Ovary (tissue), 10 donors: ENCODE measurements at regions of chr6 and their contacts with region 1.

Region 1: DNA sequence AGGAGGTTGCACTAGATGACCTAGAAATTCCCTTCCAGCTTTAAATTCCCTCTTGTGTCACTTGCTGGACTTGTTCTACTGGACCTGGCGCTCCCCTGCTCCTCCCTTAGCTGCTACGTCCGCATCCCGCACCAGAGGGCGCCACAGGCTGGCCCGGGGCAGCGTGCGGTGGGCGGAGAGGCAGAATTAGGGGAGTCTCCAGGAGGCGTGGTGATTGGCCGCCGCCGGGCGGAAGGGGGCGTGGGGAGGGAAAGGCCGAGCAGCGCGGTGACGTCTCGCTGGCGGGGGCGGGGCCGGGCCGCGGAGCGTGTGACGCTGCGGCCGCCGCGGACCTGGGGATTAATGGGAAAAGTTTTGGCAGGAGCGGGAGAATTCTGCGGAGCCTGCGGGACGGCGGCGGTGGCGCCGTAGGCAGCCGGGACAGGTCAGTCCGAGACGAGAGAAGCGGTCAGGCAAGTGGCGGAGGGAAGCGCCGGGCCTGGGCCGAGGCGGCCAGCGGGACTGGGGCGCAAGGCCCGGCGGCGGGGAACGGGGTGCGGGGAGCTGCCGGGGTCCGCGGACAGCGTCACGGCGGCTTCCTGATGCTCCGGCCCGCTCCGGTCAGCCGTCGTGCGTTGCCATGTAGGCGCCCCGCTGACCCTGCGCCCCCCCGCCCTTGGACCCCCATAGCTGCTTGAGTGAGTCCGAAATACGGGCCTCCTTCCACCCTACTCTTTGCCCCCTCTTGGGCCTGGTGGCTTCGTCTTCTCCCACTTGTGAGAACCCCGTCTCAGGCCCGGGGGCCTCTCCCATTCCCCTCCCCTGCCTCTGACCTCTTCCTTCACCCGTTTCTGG is at the start of gene PPARD:
- DNase-seq: peak; percentile 98 to 99 (median 99)
- H3K4me3 ChIP-seq: peak within 1 kb of the TSS; percentile 67
- H3K27ac ChIP-seq: peak within 1 kb of the TSS; percentile 88 to 93
- H3K4me1 ChIP-seq: peaks cover 2% of the 10 kb centered on the region
- H3K27me3 ChIP-seq: no peaks in the 10 kb centered on the region
- CTCF ChIP-seq: peak; percentile 97 to 100 (median 99)
- EP300 ChIP-seq: no peak
- POLR2A ChIP-seq: peak; percentile 86
- total RNA-seq, gene PPARD: 7.9 to 55.9 (median 25.9) TPM

Region 2: DNA sequence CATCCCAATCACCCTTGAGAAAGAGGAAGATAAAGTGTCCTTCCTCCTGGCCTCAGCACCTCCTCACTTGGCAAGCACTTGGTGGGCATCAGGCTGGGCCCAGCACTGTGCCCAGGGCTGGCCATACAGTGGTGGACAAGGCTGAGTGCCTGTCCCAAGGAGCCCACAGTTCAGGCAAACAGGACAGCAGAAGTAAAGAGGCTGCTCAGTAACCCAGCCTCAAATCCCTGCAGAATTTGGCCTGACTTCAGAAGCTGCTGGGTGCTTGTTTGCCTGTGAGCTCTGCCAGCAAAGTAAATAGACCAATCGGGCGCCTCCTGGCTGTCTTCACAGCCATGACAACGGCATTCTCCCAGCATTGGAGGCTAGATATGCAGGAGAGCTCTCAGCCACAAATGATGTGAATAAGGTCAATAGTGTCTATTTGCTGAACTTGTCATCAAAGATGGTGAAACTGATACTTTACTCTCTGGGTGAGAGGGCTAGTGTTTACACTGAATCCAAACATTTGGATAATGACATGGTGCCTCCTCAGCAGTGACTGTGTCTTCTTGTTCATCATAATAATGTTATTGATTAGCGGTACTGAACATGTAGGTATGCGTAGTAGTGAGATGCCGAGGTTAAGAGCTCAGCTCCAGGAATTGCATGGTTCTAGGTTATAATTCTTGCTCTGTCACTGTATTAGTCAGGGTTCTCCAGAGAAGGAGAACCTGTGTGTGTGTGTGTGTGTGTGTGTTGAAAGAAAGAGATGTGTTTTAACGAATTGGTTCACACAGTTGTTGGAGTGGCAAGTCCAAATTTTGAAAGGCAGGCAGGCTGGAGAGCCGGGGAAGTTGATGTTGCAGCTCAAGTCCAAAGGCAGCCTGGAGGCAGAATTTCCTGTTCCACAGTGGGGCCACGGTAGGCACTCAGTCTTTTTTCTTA is 72.9 kb after region 1 on chr6:
- intact Hi-C with region 1: loop called (anchors 2 to 10 kb)
- DNase-seq: peak; percentile 80 to 85 (median 82)
- H3K4me3 ChIP-seq: no peak overlapping the region
- H3K27ac ChIP-seq: no peak overlapping the region
- H3K4me1 ChIP-seq: peaks cover 2% of the 10 kb centered on the region
- H3K27me3 ChIP-seq: no peaks in the 10 kb centered on the region
- CTCF ChIP-seq: peak; percentile 42 to 81 (median 74)
- EP300 ChIP-seq: no peak
- POLR2A ChIP-seq: no peak

Region 3: DNA sequence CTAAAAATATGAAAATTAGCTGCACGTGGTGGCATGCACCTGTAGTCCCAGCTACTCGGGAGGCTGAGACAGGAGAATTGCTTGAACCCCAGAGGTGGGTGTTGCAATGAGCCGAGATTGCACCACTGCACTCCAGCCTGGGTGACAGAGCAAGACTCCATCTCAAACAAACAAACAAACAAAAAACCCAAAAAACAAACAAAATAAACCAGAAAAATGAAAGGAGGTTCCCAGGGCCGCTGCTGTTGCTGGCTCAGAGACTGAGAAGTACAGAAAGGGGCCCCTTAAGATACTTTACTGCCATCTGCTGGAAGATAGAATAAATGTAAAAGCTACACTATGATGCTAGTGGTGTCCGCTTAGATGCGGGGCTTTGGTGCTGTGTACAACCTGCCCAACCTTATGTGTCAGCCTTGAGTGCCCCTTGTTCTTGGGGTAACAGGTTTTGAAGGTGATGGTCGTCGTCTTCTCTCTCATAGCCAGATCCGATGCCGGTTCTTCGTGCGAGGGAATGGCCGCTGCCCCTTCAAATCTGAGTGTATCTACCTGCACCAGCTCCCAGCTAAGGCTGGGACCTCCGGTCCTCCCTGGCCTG is 106.9 kb after region 1 on chr6:
- intact Hi-C with region 1: loop called (anchors 1 to 2 kb)
- DNase-seq: peak in 1 of 5 donors; percentile 37
- H3K4me3 ChIP-seq: no peak overlapping the region
- H3K27ac ChIP-seq: no peak overlapping the region
- H3K4me1 ChIP-seq: peaks cover 6% of the 10 kb centered on the region
- H3K27me3 ChIP-seq: no peaks in the 10 kb centered on the region
- CTCF ChIP-seq: peak; percentile 62 to 86 (median 79)
- EP300 ChIP-seq: no peak
- POLR2A ChIP-seq: no peak

Region 4: DNA sequence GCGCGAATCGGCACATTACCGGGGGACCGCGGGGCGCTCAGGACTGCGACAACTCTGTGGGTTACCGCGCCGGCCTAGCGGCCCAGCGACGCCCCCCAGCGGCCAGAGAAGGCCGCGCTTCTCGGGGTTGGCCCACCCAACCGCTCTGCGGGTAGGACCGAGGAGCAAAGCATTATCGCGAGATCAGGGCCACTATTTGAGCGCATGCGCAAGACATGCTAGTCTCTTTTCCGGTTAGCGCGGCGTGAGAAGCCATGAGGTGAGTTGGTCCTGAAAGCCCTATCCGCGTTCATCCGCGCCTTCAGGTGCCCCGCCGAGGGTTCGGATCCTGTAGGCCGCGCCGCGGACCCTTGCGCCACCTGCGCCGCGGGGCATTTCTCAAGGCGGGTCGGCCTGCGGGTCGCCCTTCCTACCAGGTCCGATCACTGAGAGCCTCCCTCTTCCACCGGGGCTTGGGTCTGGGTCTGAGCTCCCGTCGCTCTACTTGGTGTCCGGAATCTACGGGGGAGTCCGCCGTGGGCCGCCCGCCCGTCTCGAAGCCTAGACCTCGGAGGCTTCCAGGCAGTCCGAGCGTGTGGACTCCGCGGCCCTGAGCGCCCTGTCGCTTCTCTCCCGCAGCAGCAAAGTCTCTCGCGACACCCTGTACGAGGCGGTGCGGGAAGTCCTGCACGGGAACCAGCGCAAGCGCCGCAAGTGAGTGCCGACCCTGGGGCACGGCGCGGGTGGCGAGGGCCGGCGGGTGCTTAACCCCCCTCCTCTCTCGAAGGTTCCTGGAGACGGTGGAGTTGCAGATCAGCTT is 125.9 kb after region 1 on chr6 and contains the start of gene RPL10A:
- intact Hi-C with region 1: loop called in 1 of 4 experiments (anchors 5 kb)
- DNase-seq: peak; percentile 96 to 98 (median 97)
- H3K4me3 ChIP-seq: peak within 1 kb of the TSS; percentile 65
- H3K27ac ChIP-seq: peak within 1 kb of the TSS; percentile 78 to 81
- H3K4me1 ChIP-seq: peaks cover 8% of the 10 kb centered on the region
- H3K27me3 ChIP-seq: no peaks in the 10 kb centered on the region
- CTCF ChIP-seq: peak; percentile 97 to 99 (median 98)
- EP300 ChIP-seq: no peak
- POLR2A ChIP-seq: peak; percentile 95
- total RNA-seq, gene RPL10A: 2,596 to 4,158 (median 3,059) TPM